ENCODE measurements at regions of chr6 and their contacts with region 1.

Region 1: DNA sequence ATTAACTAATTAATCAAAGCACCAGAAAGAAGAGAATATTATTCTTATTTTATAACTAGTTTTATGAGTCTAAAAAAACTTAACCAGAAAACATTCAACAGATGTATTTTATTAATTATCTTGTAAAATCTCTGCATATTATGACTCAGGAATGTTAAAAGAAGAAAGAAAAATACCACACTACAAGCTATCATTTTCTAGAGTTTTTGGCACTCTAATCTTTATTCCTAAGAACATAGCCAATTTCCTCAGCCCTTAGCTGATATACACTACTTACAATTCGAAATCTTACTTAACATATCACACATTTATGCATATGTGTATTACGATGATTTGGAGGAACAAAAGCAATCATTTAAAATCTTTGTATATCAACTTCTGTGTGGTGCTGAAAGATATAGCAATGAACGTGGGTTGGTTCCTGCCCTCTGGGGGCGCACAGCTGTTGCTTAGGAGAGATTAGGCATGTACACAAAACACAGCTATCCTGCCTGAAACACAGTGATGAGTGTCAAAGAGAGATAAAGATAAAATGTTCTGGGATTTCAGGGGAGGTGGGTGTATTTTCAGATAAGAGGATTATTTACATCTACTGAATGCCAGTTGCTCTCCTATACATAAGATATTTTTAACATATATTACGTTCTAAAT is 404.5 kb downstream of the SYNE1 start:
- DNase-seq: no peak
- ATAC-seq: peak; percentile 44
- H3K4me3 Mint-ChIP-seq: peak overlapping the region; percentile 84
- H3K27ac Mint-ChIP-seq: peak overlapping the region; percentile 92
- H3K4me1 Mint-ChIP-seq: peaks cover 26% of the 10 kb centered on the region
- H3K27me3 Mint-ChIP-seq: no peaks in the 10 kb centered on the region

Region 2: GRCh38 chr6:152124429-152125074 is 108.1 kb before region 1 on chr6:
- POLR2A ChIA-PET with region 1: no interaction called
- DNase-seq: no peak
- ATAC-seq: no peak
- H3K4me3 Mint-ChIP-seq: no peak overlapping the region
- H3K27ac Mint-ChIP-seq: no peak overlapping the region
- H3K4me1 Mint-ChIP-seq: no peaks in the 10 kb centered on the region
- H3K27me3 Mint-ChIP-seq: no peaks in the 10 kb centered on the region

Region 3: DNA sequence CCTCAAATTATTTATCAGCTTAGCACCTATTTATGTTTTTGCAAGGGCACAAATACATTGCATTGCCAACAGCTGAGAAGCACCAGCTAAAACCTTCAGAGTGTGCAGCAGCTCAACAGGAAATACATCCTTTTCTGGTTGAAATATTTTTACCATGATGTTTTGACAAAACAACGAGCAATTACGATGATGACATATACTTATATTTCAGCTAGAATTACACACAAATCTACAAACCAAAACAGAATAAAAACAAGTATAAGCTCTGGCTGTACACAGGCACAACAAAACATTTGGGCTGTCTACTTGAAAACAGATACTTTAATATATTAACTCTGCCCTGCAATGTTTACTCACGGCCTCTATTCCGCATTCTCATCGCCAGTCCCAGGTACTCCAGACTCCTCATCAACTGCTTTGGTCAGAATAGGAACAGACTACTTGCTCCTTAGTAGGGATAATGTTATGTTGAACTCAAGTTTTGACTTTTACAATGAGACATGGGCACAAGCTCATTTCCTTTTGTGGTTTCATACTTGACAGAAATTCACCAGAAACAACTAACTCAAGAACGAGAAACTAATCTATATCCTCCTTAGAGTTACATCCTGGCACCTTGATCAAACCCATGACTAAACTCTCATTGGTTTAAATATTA is 47.6 kb before region 1 on chr6:
- POLR2A ChIA-PET with region 1: interaction called, 21 read pairs
- DNase-seq: no peak
- ATAC-seq: peak; percentile 81
- H3K4me3 Mint-ChIP-seq: peak overlapping the region; percentile 87
- H3K27ac Mint-ChIP-seq: peak overlapping the region; percentile 97
- H3K4me1 Mint-ChIP-seq: peaks cover 33% of the 10 kb centered on the region
- H3K27me3 Mint-ChIP-seq: no peaks in the 10 kb centered on the region

Region 4: DNA sequence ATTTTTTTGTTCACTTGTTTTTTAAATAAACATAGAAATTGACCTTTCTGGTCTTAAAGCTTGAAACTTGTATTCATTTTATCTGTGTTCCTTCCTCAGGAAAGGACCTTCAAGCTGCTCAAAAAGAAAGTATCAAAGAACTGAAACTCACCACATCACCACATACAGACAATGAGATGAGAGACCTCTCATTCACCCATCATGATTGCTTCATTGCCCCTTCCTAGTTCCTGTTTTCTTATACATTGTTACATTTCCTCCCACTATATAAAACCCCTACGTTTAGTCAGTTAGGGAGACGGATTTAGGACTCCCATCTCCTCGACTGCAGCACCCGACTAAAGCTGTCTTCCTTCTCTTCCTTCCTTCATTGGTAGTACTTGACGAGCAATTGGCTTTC is 1625.9 kb after region 1 on chr6:
- POLR2A ChIA-PET with region 1: no interaction called
- DNase-seq: no peak
- ATAC-seq: no peak
- H3K4me3 Mint-ChIP-seq: no peak overlapping the region
- H3K27ac Mint-ChIP-seq: no peak overlapping the region
- H3K4me1 Mint-ChIP-seq: peaks cover 2% of the 10 kb centered on the region
- H3K27me3 Mint-ChIP-seq: no peaks in the 10 kb centered on the region